A549 (cell line): ENCODE measurements at regions of chr12 and their contacts with region 1.

Region 1: DNA sequence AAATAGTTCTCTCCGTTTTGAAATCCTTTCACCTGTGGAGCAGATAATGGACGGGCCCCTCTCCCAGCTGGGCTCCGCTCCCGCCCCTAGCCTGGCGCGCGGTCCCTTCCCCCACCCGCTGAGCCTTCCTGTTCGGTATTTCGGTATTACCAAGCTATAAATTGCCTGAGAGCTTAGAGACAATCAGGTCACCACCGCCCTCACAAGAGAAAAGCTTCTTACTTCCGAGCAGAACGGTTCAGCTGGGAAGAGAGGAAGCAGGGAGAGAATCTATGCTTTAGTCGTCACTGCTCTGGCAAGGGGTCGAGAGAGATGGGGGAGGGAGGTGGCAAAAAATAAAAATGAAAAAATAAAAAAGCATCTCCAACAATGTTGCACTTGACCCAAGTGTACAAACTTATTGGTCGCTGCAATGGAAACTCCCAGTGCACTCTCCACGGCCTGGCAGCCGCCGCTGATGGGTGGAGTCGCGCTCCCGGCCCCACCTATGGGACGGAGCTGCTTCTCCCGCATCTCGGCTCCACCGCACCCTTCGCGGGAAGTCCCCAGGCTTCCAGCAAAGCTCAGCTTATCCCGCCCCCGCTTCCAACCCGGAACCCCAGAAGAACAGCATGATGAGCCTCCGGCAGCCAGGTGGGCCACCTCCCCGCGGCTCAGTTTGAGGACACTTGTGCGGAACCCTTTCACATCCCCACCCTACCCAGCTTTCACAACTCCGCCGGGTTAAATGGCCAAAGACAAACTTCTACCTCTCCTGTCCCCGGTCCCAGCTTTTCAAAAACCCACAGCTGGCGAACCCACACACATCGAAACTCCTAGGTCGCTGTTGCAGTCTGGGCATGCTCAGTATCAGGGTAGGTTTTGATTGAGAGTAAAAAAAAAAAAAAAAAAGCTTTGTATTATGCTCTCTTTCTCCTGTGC is 832 bp upstream of the SYT1 start:
- DNase-seq: peak; percentile 72 to 86
- ATAC-seq: peak; percentile 79 to 86
- H3K4me3 ChIP-seq: peak overlapping the region; percentile 94
- H3K27ac ChIP-seq: peak overlapping the region; percentile 89 to 98
- H3K4me1 ChIP-seq: peaks cover 28% of the 10 kb centered on the region
- CTCF ChIP-seq: no peak
- EP300 ChIP-seq: no peak
- POLR2A ChIP-seq: peak; percentile 52; the same call in 1 of the 2 replicates
- RAD21 ChIP-seq: 0 out of 5 replicates have a peak, but pooled peaks of 1 of the 2 experiments have one; percentile 23

Region 2: DNA sequence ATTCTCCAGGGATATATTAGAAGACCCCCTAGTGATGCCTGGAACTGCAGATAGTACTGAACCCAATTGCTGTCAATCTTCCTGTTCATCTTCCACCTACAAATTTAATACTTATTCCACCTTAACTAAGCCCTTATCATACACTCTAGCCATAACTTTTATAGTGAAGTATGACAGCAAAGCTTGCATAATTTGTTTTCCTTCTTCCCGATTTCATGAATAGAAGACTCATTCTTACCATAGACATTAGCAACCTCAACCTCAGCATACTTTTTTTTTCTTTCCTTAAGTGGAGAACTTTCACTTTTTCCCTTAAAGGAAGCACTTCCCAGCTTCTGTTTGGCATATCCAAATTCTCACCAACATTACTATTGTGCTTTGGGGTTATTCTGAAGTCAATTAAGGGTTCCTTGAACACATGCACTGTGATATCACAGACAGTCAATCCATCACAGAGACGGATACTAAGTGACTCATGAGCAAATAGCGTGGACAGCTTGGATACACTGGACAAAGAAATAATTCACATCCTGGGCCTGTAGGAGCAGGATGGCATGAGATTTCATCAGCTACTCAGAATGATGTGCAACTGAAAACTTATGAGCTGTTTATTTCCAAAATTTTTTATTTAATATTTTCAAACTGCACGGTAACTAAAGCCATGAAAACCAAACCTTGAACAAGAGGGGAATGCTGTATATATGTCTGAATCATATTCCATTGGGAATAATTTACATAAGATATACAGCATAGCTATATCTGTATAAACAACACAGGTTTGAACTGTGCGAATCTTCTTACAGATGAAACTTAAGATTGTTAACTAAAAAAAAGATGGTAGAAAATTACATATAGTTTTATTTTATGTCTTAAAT is 64.7 kb after region 1 on chr12:
- CTCF ChIA-PET with region 1: no interaction called
- POLR2A ChIA-PET with region 1: interaction called, 19 read pairs
- DNase-seq: peak; percentile 14 to 91
- ATAC-seq: peak; percentile 99 to 100
- H3K4me3 ChIP-seq: no peak overlapping the region
- H3K27ac ChIP-seq: peak overlapping the region; percentile 66 to 87
- H3K4me1 ChIP-seq: peaks cover 28% of the 10 kb centered on the region; the same call in 2 of the 3 replicates
- CTCF ChIP-seq: no peak
- EP300 ChIP-seq: peak; percentile 39 to 56; a peak in 2 of 5 replicates
- POLR2A ChIP-seq: no peak
- RAD21 ChIP-seq: peak; percentile 3 to 23; a peak in 1 of 5 replicates